Panc1 (cell line): ENCODE measurements at regions of chr15 and their contacts with region 1.

Region 1: GRCh38 chr15:77496710-77497103 is 76.0 kb downstream of the HMG20A start:
- DNase-seq: peak; percentile 36
- ATAC-seq: peak; percentile 90
- H3K4me3 ChIP-seq: peak overlapping the region; percentile 14 to 24; a peak in 3 of 4 replicates
- H3K27ac ChIP-seq: peak overlapping the region; percentile 84
- H3K4me1 ChIP-seq: peaks cover 57% of the 10 kb centered on the region
- H3K27me3 ChIP-seq: no peaks in the 10 kb centered on the region
- CTCF ChIP-seq: peak; percentile 97

Region 2: GRCh38 chr15:77118882-77119321 is 377.8 kb before region 1 on chr15:
- CTCF ChIA-PET with region 1: interaction called, 5 read pairs
- POLR2A ChIA-PET with region 1: no interaction called
- in situ Hi-C with region 1: no loop called
- intact Hi-C with region 1: loop called (anchors 2 kb)
- DNase-seq: peak; percentile 45
- ATAC-seq: peak; percentile 79
- H3K4me3 ChIP-seq: no peak overlapping the region
- H3K27ac ChIP-seq: no peak overlapping the region
- H3K4me1 ChIP-seq: peaks cover 11% of the 10 kb centered on the region
- H3K27me3 ChIP-seq: no peaks in the 10 kb centered on the region
- CTCF ChIP-seq: peak; percentile 73

Region 3: DNA sequence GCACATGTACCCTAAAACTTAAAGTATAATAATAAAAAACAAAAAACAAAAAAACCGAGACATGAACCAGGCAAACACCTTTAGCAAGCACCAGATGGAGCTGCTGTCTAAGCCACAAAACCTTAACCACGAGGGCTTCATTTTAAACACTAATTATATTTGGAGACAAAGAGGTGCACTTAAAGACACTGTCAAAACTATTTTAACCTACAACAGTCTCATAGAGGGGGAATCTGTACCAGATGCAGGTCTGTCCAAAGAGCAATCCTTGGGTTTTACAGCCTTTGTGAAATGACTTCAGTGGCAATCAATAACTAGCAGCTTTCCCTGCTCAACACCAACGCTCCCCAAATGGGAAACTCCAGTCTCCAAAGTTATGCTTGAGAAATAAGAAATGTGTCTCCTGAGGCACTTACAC is 310.1 kb before region 1 on chr15:
- CTCF ChIA-PET with region 1: interaction called, 4 read pairs
- POLR2A ChIA-PET with region 1: interaction called, 9 read pairs
- in situ Hi-C with region 1: no loop called
- intact Hi-C with region 1: loop called (anchors 10 kb)
- DNase-seq: no peak
- ATAC-seq: no peak
- H3K4me3 ChIP-seq: no peak overlapping the region
- H3K27ac ChIP-seq: no peak overlapping the region
- H3K4me1 ChIP-seq: peaks cover 4% of the 10 kb centered on the region; the same call in 1 of the 2 replicates
- H3K27me3 ChIP-seq: no peaks in the 10 kb centered on the region
- CTCF ChIP-seq: peak; percentile 67

Region 4: GRCh38 chr15:77347208-77347607 is 149.5 kb before region 1 on chr15:
- CTCF ChIA-PET with region 1: no interaction called
- POLR2A ChIA-PET with region 1: no interaction called
- in situ Hi-C with region 1: no loop called
- intact Hi-C with region 1: no loop called
- DNase-seq: no peak
- ATAC-seq: no peak
- H3K4me3 ChIP-seq: no peak overlapping the region
- H3K27ac ChIP-seq: no peak overlapping the region
- H3K4me1 ChIP-seq: no peaks in the 10 kb centered on the region
- H3K27me3 ChIP-seq: no peaks in the 10 kb centered on the region
- CTCF ChIP-seq: no peak

Region 5: DNA sequence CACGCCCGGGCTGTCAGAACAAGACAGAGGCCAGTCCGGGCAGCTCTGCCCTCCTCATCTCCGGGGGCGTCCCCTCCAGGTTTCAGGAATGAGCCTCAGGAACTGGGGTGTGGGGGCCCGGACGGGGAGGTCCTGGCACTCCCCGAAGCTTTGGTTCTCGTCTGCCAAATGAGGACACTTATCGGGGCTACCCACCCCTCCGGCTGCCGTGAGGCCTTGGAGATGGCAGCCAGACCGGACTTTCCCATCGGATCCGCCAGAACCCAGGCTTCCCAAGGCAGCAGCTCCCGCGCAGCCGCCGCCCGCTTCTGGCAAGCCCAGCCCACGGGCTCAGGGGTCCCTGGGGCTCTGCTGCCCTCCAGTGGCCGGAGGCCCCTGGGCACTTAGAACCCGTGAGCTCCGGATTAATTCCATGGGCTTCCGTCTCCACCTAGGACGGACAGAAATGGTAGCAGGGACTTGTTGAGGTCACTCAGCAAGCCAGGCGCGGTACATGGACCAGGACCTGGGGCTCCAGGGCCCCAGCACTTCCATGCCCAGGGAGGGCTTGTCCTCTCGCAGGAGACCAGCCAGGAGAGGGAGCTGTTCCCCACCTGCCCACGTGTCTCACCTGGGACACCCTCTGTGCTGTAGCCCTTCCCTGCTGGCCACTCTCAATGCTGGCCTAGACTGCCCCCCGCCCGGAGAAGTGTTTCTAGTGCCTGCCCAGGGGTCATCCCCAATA is 46.6 kb after region 1 on chr15:
- CTCF ChIA-PET with region 1: interaction called, 14 read pairs
- POLR2A ChIA-PET with region 1: no interaction called
- in situ Hi-C with region 1: no loop called
- intact Hi-C with region 1: no loop called
- DNase-seq: peak; percentile 58
- ATAC-seq: peak; percentile 88
- H3K4me3 ChIP-seq: peak overlapping the region; percentile 36 to 56
- H3K27ac ChIP-seq: peak overlapping the region; percentile 90
- H3K4me1 ChIP-seq: peaks cover 61% of the 10 kb centered on the region
- H3K27me3 ChIP-seq: no peaks in the 10 kb centered on the region
- CTCF ChIP-seq: peak; percentile 99

Region 6: DNA sequence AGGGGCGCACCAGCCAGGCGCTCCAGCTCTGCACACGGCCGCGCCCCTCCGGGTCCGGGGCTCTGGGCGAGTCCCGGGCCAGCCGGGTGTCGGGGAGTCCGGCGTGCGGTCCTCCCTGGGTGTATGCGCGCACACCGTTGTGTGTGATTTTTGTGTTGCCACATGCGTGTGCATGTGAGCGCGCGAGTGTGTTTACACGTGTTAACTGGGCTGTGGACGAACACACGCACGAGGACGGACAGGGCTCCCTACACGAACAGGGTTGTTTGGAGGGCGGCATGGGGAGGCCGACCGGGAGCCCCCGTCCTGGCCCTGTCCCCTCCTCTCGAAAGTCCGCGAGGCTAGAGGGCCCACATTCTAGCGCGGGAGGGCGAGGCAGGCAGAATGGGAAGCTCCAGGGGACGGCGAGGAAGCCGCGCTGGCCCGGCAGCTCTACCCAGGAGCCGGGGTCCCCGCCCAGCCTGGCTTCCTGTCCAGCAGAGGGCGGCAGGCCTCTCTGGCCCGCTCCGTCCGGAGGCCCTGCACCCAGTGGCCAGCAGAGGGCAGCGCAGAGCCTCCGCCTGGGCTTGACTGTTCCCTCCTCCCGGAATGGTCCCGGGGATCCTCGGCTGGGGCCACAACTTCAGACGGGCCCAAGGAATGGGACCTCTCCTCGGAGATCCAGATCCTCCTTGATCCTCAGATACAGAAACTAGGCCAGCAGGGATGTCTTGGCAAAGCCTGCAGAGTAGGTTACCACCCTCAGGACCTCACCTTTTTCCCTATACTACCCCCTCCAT is 136.6 kb after region 1 on chr15:
- CTCF ChIA-PET with region 1: interaction called, 12 read pairs
- POLR2A ChIA-PET with region 1: no interaction called
- in situ Hi-C with region 1: no loop called
- intact Hi-C with region 1: no loop called
- DNase-seq: peak; percentile 57
- ATAC-seq: peak; percentile 91
- H3K4me3 ChIP-seq: peak overlapping the region; percentile 39 to 51
- H3K27ac ChIP-seq: no peak overlapping the region
- H3K4me1 ChIP-seq: peaks cover 24% of the 10 kb centered on the region
- H3K27me3 ChIP-seq: no peaks in the 10 kb centered on the region; the same call in 1 of the 2 replicates
- CTCF ChIP-seq: peak; percentile 100